Activated T-helper 2 cell treated with anti-CD3 and anti-CD28 coated beads, Interferon-gamma antibody, Interleukin-2, Interleukin-4, amounts not matched to agents 10 μg/mL and 5 μg/mL and 100 μg/mL, durations not matched to agents 14 hours and 24 hours and 36 hours (primary cell): ENCODE measurements at regions of chr11 and their contacts with region 1.

Region 1: DNA sequence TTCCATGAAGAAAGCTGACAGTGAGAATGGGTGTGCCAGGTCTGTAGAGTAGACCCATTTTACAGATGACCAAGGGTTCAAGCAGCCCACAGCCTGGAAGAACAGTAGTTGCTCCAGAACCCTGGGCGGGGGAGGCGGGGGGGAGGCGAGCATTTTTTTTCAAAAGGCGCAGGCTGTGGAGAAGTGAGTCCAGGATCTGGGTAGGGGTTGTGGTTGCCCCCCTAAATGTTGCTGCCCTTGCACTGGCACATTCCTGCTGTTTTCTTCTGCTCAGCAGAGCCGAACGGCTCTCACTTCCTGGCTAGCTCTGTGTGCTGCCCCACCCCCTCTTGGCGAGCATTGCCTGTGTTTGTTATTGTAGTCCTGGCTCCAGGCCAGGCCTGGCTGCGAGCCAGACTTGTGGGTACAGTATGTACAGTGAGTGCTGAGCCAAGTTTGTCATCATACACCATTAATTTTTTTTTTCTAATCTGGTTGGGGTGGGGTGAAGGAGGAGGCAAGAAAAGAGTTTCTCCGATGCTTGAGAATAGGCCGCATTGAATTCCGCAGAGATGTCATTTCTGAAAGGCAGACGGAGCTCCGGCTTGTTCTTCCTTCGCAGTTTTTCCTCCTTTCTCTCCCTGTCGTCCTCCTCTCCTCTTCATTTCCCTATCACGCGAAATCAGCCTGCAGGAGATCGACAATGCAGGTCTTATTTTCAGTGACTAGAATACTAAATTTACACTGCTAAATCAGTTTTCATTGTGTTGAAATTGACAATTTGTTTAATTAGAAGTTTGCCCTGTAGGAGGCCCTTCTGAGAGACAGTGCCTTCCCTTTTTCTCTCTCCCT is 100.5 kb downstream of the ZBTB16 start:
- DNase-seq: peak; percentile 90
- H3K4me3 Mint-ChIP-seq: peak overlapping the region; percentile 53
- H3K27ac Mint-ChIP-seq: peak overlapping the region; percentile 78
- H3K4me1 Mint-ChIP-seq: peaks cover 50% of the 10 kb centered on the region
- H3K27me3 Mint-ChIP-seq: no peaks in the 10 kb centered on the region

Region 2: DNA sequence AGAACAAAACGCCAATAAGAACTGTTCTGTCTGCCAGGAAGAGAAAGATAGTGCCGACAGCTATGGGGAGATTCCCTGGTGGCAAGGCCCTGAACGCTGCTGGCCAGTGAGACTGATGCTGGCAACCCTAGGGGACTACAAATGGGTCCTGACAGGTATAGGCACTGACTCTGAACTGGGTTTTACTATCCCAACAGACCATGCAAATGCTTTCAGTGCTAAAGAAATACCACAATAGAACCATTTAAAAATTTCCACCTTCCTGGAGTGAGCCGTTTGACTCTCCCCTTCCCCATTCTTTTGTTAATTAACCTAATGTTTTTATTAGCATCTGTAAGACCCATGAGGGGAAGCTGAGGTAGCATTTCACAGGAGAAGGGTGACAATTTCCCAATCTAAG is 310.3 kb before region 1 on chr11:
- intact Hi-C with region 1: no loop called
- DNase-seq: no peak
- H3K4me3 Mint-ChIP-seq: no peak overlapping the region
- H3K27ac Mint-ChIP-seq: no peak overlapping the region
- H3K4me1 Mint-ChIP-seq: peaks cover 7% of the 10 kb centered on the region
- H3K27me3 Mint-ChIP-seq: no peaks in the 10 kb centered on the region

Region 3: GRCh38 chr11:114219559-114220349 is 59.7 kb after region 1 on chr11:
- intact Hi-C with region 1: loop called (anchors 10 kb)
- DNase-seq: no peak
- H3K4me3 Mint-ChIP-seq: no peak overlapping the region
- H3K27ac Mint-ChIP-seq: no peak overlapping the region
- H3K4me1 Mint-ChIP-seq: peaks cover 36% of the 10 kb centered on the region
- H3K27me3 Mint-ChIP-seq: peaks cover 18% of the 10 kb centered on the region